Mammary epithelial cell (primary cell): ENCODE measurements at regions of chr22 and their contacts with region 1.

Region 1: GRCh38 chr22:37267135-37267587 is 15.1 kb upstream of the CYTH4 start:
- DNase-seq: no peak
- H3K4me3 ChIP-seq: peak overlapping the region; percentile 25 to 38 (median 31)
- H3K27ac ChIP-seq: no peak overlapping the region
- H3K4me1 ChIP-seq: peaks cover 2% of the 10 kb centered on the region
- H3K27me3 ChIP-seq: no peaks in the 10 kb centered on the region
- CTCF ChIP-seq: peak; percentile 70 to 87

Region 2: GRCh38 chr22:37401401-37402183 is 134.4 kb after region 1 on chr22:
- CTCF ChIA-PET with region 1: no interaction called
- dilution Hi-C with region 1: loop called (anchors 10 kb)
- in situ Hi-C with region 1: no loop called
- intact Hi-C with region 1: no loop called
- DNase-seq: no peak
- H3K4me3 ChIP-seq: no peak overlapping the region
- H3K27ac ChIP-seq: no peak overlapping the region
- H3K4me1 ChIP-seq: no peaks in the 10 kb centered on the region
- H3K27me3 ChIP-seq: no peaks in the 10 kb centered on the region
- CTCF ChIP-seq: no peak